CD4-positive, alpha-beta memory T cell (primary cell): ENCODE measurements at regions of chr14 and their contacts with region 1.

Region 1: GRCh38 chr14:35146711-35147149 is 24.4 kb downstream of the PRORP start:
- DNase-seq: no peak
- H3K4me3 ChIP-seq: no peak overlapping the region
- H3K4me3 Mint-ChIP-seq: no peak overlapping the region
- H3K27ac ChIP-seq: no peak overlapping the region
- H3K27ac Mint-ChIP-seq: peak overlapping the region in 3 of 7 donors; percentile 12 to 78 (median 19)
- H3K4me1 ChIP-seq: peaks cover 7% of the 10 kb centered on the region
- H3K4me1 Mint-ChIP-seq: peaks cover 12 to 30% (median 15%) of the 10 kb centered on the region in 4 donors
- H3K27me3 ChIP-seq: no peaks in the 10 kb centered on the region
- H3K27me3 Mint-ChIP-seq: no peaks in the 10 kb centered on the region

Region 2: GRCh38 chr14:34489353-34489752 is 657.4 kb before region 1 on chr14:
- CTCF ChIA-PET with region 1: no interaction called
- POLR2A ChIA-PET with region 1: no interaction called
- intact Hi-C with region 1: no loop called
- DNase-seq: no peak
- H3K4me3 ChIP-seq: no peak overlapping the region
- H3K4me3 Mint-ChIP-seq: no peak overlapping the region
- H3K27ac ChIP-seq: no peak overlapping the region
- H3K27ac Mint-ChIP-seq: no peak overlapping the region
- H3K4me1 ChIP-seq: no peaks in the 10 kb centered on the region
- H3K4me1 Mint-ChIP-seq: no peaks in the 10 kb centered on the region
- H3K27me3 ChIP-seq: no peaks in the 10 kb centered on the region
- H3K27me3 Mint-ChIP-seq: no peaks in the 10 kb centered on the region

Region 3: GRCh38 chr14:35134328-35135123 is 12.2 kb before region 1 on chr14:
- CTCF ChIA-PET with region 1: interaction called, 8 read pairs
- POLR2A ChIA-PET with region 1: no interaction called
- intact Hi-C with region 1: loop called (anchors 1 kb)
- DNase-seq: no peak
- H3K4me3 ChIP-seq: no peak overlapping the region
- H3K4me3 Mint-ChIP-seq: no peak overlapping the region
- H3K27ac ChIP-seq: no peak overlapping the region
- H3K27ac Mint-ChIP-seq: peak overlapping the region; percentile 38 to 85 (median 76)
- H3K4me1 ChIP-seq: no peaks in the 10 kb centered on the region
- H3K4me1 Mint-ChIP-seq: peaks cover 26 to 37% (median 30%) of the 10 kb centered on the region in 4 donors
- H3K27me3 ChIP-seq: no peaks in the 10 kb centered on the region
- H3K27me3 Mint-ChIP-seq: no peaks in the 10 kb centered on the region